Heart left ventricle (tissue), 16 donors: ENCODE measurements at regions of chr19 and their contacts with region 1.

Region 1: GRCh38 chr19:9406798-9407352 is 28.5 kb downstream of the ZNF266 start:
- DNase-seq: peak; percentile 83 to 94 (median 88)
- ATAC-seq: peak; percentile 92 to 99 (median 98)
- H3K4me3 ChIP-seq: peak overlapping the region; percentile 15 to 80 (median 66)
- H3K27ac ChIP-seq: peak overlapping the region in 10 of 12 donors; percentile 14 to 76 (median 47)
- H3K4me1 ChIP-seq: peaks cover 0 to 28% (median 0%) of the 10 kb centered on the region in 12 donors
- H3K27me3 ChIP-seq: no peaks in the 10 kb centered on the region
- CTCF ChIP-seq: no peak
- POLR2A ChIP-seq: no peak

Region 2: DNA sequence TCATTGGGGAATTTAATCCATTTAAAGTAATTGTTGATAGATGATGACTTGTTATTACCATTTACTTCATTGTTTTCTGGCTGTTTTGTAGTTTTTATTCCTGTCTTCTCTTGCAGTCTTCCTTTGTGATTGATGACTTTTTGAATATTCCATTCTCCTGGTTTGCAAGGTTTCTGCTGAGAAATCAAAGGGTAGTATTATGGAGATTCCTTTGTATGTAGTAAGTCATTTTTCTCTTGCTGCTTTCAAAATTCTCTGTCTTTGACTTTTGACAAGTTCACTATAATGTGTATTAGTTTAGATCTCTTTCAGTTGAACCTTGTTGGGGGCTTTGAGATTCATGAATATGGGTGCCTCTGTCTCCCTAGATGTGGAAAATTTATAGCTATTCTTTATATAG is 76.9 kb before region 1 on chr19:
- intact Hi-C with region 1: loop called in 1 of 10 experiments (anchors 5 kb)
- DNase-seq: no peak
- ATAC-seq: no peak
- H3K4me3 ChIP-seq: no peak overlapping the region
- H3K27ac ChIP-seq: no peak overlapping the region
- H3K4me1 ChIP-seq: peaks cover 0 to 6% (median 1%) of the 10 kb centered on the region in 12 donors
- H3K27me3 ChIP-seq: no peaks in the 10 kb centered on the region
- CTCF ChIP-seq: no peak
- POLR2A ChIP-seq: no peak